PC-9 (cell line): ENCODE measurements at regions of chr17 and their contacts with region 1.

Region 1: GRCh38 chr17:57130761-57131461 is 45.9 kb downstream of the AKAP1 start:
- DNase-seq: peak; percentile 66 to 67
- H3K4me3 ChIP-seq: no peak overlapping the region; the same call in 1 of the 2 replicates
- H3K27ac ChIP-seq: no peak overlapping the region
- H3K4me1 ChIP-seq: peaks cover 7% of the 10 kb centered on the region
- H3K27me3 ChIP-seq: no peaks in the 10 kb centered on the region
- CTCF ChIP-seq: peak; percentile 96

Region 2: GRCh38 chr17:57671667-57672632 is 541.0 kb after region 1 on chr17:
- CTCF ChIA-PET with region 1: no interaction called
- POLR2A ChIA-PET with region 1: no interaction called
- intact Hi-C with region 1: loop called (anchors 10 kb)
- DNase-seq: peak in 1 of 2 experiments; percentile 44
- H3K4me3 ChIP-seq: no peak overlapping the region
- H3K27ac ChIP-seq: no peak overlapping the region
- H3K4me1 ChIP-seq: no peaks in the 10 kb centered on the region
- H3K27me3 ChIP-seq: peaks cover 3% of the 10 kb centered on the region; the same call in 1 of the 2 replicates
- CTCF ChIP-seq: peak; percentile 91

Region 3: GRCh38 chr17:57747221-57748017 is 616.5 kb after region 1 on chr17:
- CTCF ChIA-PET with region 1: interaction called, 5 read pairs
- POLR2A ChIA-PET with region 1: no interaction called
- intact Hi-C with region 1: loop called (anchors 5 kb)
- DNase-seq: peak; percentile 15 to 54
- H3K4me3 ChIP-seq: no peak overlapping the region
- H3K27ac ChIP-seq: no peak overlapping the region
- H3K4me1 ChIP-seq: no peaks in the 10 kb centered on the region
- H3K27me3 ChIP-seq: peaks cover 82% of the 10 kb centered on the region
- CTCF ChIP-seq: peak; percentile 88

Region 4: GRCh38 chr17:57833179-57833939 is 702.4 kb after region 1 on chr17:
- CTCF ChIA-PET with region 1: no interaction called
- POLR2A ChIA-PET with region 1: no interaction called
- intact Hi-C with region 1: loop called (anchors 2 kb)
- DNase-seq: peak; percentile 37 to 53
- H3K4me3 ChIP-seq: no peak overlapping the region
- H3K27ac ChIP-seq: no peak overlapping the region
- H3K4me1 ChIP-seq: no peaks in the 10 kb centered on the region
- H3K27me3 ChIP-seq: no peaks in the 10 kb centered on the region
- CTCF ChIP-seq: peak; percentile 97